GM13977 (cell line): ENCODE measurements at regions of chr3 and their contacts with region 1.

Region 1: DNA sequence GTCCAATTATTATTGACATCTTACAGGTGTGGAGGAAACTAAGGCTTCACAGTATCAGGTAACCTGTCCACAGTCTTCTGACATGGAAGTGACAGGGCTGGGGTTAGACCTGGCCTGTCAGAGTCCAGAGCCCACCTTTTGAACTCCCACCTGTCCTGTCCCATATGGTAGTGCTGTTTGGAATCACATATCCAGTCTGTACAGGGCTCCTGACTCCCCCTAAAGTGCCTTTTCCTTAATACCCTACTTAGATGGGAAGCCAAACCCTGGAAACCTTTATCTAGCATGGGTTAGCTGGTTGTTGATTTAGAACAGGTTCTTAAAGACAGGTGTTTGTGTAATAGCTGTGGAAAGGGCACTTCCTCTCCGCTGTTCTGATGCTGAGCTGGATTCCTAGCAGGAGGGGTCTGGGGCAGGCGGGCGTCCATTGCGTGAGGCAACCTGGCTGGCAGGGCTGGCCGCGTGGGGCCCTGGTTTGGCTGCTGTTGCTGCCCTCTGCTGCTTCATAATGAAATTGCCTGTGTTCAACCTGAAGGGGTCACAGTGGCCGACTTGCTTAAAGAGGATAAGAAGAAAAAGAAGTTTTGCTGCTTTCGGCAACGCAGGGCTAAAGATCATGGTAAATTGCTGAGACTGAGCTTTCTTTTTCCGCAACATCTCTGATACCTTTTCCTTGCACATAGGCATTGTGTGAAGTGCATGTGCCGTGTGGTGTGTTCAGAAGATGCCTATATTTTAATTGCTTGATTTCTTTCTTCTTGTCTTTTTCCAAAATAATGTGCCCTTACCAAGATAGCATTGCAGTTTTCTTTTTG is 136.2 kb downstream of the CHDH start:
- DNase-seq: peak; percentile 74
- CTCF ChIP-seq: peak; percentile 83

Region 2: DNA sequence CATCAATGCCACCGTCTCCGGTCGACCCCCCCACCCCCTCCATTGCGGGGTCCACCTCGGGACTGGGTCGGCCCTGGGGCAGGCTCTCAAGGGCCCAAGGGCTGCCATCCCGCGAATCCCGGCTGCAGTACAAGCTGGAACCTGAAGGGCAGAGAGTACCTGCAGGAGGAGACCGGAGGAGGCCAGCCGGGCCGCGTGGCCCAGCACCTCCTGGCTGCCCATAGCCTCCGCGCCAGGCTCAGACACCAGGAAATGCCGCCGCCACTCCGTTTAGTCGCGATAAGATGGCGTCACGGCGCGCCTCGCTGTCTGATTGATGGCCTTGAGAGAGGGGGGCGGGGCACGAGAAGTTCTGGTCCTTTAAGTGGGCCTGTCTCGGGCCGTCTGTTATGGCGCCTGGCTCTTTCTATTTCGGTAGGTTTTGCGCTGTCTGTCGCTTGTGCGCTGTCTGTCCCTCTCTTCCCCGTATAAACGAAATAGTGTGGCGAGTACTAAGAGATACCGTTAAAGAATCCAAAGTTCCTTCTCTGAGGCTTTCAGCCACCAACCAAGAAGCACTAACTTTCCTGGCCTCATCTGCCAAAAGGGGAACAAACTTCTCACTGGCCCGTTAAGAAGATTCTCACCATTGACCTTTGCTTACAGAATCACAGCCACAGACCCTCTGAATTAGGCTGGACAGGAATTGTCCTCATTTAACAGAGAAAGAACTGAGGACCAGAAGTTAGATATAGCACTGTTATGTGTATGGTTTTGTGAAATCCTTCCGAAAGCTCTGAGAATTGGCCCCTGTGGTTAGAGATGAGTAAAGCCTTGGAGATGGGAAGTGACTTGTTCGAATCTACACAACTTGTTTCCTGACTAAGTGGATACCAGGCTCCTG is 579.6 kb before region 1 on chr3 and contains the start of gene RFT1:
- in situ Hi-C with region 1: no loop called
- DNase-seq: peak; percentile 89
- CTCF ChIP-seq: no peak

Region 3: DNA sequence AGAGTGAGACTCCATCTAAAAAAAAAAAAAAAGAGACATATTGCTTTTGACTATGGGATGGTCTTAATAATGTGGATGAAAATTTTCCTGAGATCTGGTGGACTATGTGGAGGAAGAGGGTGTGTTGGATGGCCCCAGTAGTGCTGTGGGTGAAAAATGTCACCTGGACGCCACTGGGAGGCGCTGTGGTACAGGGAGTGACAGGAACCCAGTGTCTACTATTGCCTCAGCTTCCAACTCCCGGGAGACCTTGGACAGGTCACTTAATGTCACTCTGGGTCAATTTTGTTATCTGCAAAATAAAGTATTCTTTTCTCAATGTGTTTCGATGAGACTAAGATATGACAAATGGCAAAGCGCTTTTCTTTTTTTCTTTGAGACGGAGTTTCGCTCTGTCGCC is 335.0 kb before region 1 on chr3:
- in situ Hi-C with region 1: loop called (anchors 25 kb)
- DNase-seq: peak; percentile 72
- CTCF ChIP-seq: peak; percentile 81